ENCODE measurements at regions of chr7 and their contacts with region 1.

Region 1: DNA sequence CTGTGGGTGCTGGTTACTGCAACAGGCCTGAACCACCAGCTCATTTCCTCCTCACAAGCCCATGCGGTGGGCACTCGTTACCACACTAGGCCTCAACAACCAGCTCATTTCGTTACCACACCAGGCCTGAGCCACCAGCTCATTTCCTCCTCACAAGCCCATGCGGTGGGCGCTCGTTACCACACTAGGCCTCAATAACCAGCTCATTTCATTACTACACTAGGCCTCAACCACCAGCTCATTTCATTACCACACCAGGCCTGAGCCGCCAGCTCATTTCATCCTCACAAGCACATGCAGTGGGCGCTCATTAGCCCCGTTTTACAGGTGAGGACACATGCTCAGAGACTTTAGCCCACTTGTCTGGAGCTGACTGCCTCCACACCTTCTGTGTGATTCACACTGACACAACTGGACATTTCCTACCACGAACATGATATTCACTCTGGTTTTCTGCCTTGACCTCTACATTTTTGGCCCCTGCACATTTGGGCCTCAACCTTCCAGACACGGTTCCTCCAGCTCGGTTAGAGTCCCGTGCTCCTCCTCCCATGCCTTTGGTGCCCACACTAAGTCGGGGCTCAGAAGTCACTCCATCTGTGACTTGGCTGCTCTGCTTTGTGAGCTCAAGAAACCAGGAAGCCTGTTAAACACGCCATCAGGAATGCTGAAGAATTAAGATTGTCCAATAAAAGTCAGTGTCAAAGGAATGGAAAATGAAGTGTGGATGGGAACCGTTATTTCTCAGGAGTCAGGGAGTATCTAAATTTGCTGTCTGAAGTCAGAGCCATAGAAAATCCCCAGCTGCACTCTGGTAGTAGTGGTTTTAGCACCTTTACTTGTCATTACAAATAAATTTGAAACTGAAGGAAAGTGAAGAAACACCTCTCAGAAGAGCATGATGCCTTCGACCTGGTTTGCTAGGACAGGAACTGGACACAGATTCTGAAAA is 55.8 kb upstream of the LANCL2 start:
- DNase-seq: peak; percentile 61
- H3K4me3 Mint-ChIP-seq: peak overlapping the region; percentile 20
- H3K27ac Mint-ChIP-seq: peak overlapping the region; percentile 93
- H3K4me1 Mint-ChIP-seq: peaks cover 36% of the 10 kb centered on the region
- H3K27me3 Mint-ChIP-seq: peaks cover 20% of the 10 kb centered on the region

Region 2: GRCh38 chr7:55086413-55087201 is 222.7 kb before region 1 on chr7:
- intact Hi-C with region 1: loop called (anchors 1 kb)
- DNase-seq: no peak
- H3K4me3 Mint-ChIP-seq: peak overlapping the region; percentile 52
- H3K27ac Mint-ChIP-seq: peak overlapping the region; percentile 51
- H3K4me1 Mint-ChIP-seq: peaks cover 25% of the 10 kb centered on the region
- H3K27me3 Mint-ChIP-seq: peaks cover 29% of the 10 kb centered on the region

Region 3: GRCh38 chr7:55132890-55133551 is 176.3 kb before region 1 on chr7:
- intact Hi-C with region 1: loop called (anchors 1 kb)
- DNase-seq: no peak
- H3K4me3 Mint-ChIP-seq: no peak overlapping the region
- H3K27ac Mint-ChIP-seq: peak overlapping the region; percentile 37
- H3K4me1 Mint-ChIP-seq: peaks cover 22% of the 10 kb centered on the region
- H3K27me3 Mint-ChIP-seq: peaks cover 4% of the 10 kb centered on the region

Region 4: DNA sequence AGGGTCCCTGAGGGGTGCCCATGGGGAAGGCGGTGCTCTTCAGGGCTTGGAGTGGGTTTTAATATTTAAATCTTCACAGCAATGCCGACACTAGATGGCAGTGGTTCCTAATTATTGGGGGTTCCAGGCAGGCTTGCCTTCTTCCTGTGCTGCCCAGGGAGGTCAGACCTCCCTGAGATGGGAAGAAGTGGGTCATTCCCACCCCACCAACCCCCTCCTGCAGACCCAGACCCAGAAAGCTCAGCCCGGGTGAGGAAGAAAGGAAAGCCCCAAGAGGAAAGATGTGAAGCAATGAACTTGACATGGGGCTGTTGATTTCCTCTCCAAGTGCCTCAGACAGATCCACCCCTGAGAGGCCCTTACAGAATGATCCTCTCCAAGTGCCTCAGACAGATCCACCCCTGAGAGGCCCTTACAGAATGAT is 29.3 kb before region 1 on chr7:
- intact Hi-C with region 1: loop called (anchors 1 kb)
- DNase-seq: peak; percentile 29
- H3K4me3 Mint-ChIP-seq: no peak overlapping the region
- H3K27ac Mint-ChIP-seq: no peak overlapping the region
- H3K4me1 Mint-ChIP-seq: peaks cover 5% of the 10 kb centered on the region
- H3K27me3 Mint-ChIP-seq: peaks cover 5% of the 10 kb centered on the region

Region 5: GRCh38 chr7:55415173-55415778 is 106.0 kb after region 1 on chr7:
- intact Hi-C with region 1: loop called (anchors 1 kb)
- DNase-seq: peak; percentile 65
- H3K4me3 Mint-ChIP-seq: no peak overlapping the region
- H3K27ac Mint-ChIP-seq: peak overlapping the region; percentile 20
- H3K4me1 Mint-ChIP-seq: peaks cover 4% of the 10 kb centered on the region
- H3K27me3 Mint-ChIP-seq: no peaks in the 10 kb centered on the region

Region 6: DNA sequence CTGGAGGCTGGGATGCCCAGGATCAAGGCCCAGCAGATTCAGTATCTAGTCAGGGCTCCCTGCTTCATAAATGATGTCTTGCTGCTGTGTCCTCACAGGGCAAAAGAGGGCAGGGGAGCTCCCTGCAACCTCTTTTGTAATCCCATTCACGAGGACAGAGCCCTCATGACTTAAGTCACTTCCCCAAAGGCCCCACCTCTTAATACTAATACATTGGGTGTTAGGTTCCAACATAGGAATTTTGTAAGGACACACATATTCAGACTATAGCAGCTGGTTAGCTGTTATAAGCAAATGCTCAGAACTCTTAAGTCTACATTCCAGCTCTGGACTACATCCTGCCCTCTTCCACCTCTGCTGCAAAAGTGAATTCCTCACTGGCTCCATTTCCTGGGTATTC is 200.0 kb after region 1 on chr7:
- intact Hi-C with region 1: loop called (anchors 1 kb)
- DNase-seq: no peak
- H3K4me3 Mint-ChIP-seq: no peak overlapping the region
- H3K27ac Mint-ChIP-seq: peak overlapping the region; percentile 64
- H3K4me1 Mint-ChIP-seq: peaks cover 76% of the 10 kb centered on the region
- H3K27me3 Mint-ChIP-seq: no peaks in the 10 kb centered on the region

Measured in activated T-helper 1 cell treated with anti-CD3 and anti-CD28 coated beads, Interleukin-12 subunit alpha, Interleukin-12 subunit beta, Interleukin-2, Interleukin-4 antibody, amounts not matched to agents 30 ng/mL and 10 ng/mL and 1 ng/mL, durations not matched to agents 14 hours and 24 hours and 36 hours (primary cell).